ENCODE measurements at regions of chr9 and their contacts with region 1.

Region 1: DNA sequence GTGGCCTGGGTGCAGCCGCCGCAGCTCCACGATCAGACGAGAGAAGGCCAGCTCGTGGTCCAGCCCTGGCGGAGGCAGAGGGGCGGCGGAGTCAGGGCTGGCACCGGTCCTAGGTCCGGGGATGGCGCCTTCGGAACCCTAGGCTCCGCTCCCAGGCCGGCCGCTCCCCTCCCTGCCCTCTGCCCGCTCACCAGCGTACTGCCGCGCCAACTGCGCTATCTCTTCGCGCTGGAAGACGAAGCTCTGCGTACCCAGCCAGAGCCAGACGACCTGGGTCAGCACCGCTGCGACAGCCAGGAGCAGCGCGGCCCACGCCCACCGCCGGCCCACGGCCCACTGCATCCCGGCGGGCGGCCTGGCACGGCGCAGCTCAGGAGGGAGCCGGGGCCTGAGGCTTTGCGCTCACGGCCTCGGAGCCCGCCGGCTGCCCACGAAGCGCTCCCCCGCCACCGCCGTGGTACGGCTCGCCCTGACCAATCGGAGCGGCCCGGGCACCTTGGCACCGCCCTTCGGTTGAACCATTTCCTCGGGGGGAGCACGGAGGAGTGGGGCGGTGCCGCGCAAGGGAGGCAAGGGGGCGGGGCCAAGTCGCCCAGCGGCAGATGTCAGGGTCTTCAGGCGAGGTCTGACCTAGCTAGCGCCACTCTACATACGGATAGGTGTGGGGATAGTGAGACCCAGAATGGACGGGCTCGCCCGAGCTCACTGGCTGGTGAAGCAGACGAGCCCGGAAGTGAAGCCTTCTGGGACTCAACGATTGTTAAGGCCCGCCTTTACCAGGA is at the start of gene SIGMAR1:
- DNase-seq: peak; percentile 93
- ATAC-seq: peak; percentile 95
- H3K4me3 Mint-ChIP-seq: peak within 1 kb of the TSS; percentile 87
- H3K27ac Mint-ChIP-seq: peak within 1 kb of the TSS; percentile 78
- H3K4me1 Mint-ChIP-seq: peaks cover 29% of the 10 kb centered on the region
- H3K27me3 Mint-ChIP-seq: no peaks in the 10 kb centered on the region
- CTCF ChIP-seq: no peak
- total RNA-seq, gene SIGMAR1: 27.2 TPM in 2 replicates

Region 2: GRCh38 chr9:34437006-34437925 is 200.3 kb before region 1 on chr9:
- CTCF ChIA-PET with region 1: no interaction called
- POLR2A ChIA-PET with region 1: no interaction called
- intact Hi-C with region 1: loop called (anchors 1 kb)
- DNase-seq: no peak
- ATAC-seq: peak; percentile 85
- H3K4me3 Mint-ChIP-seq: no peak overlapping the region
- H3K27ac Mint-ChIP-seq: no peak overlapping the region
- H3K4me1 Mint-ChIP-seq: no peaks in the 10 kb centered on the region
- H3K27me3 Mint-ChIP-seq: no peaks in the 10 kb centered on the region
- CTCF ChIP-seq: no peak

Region 3: DNA sequence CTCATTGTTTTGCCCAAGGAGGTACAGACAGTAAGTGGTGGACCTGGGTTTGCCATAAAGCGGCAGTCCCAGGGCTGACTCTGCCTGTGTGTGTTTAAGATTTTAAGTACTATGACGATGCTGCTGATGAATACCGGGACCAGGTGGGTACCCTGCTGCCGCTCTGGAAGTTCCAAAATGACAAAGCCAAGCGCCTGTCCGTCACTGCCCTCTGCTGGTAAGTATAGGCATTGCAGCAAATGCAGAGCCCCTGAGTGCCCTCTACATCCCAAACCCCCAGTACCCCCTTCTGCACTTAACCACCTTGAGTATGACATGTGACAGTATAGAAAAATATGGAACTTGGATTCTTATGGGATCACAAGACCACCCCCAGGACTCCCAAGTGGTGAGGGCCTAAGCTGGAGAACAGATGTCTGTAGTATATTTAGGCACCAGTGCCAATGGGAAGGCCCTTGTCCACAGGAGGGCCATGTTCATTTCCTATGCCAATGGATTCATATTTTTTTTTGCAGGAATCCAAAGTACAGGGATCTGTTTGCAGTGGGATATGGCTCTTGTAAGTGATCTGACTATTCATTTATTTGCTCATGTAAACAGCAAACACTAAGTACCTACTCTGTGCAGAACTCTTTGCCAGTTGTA is 136.8 kb before region 1 on chr9:
- CTCF ChIA-PET with region 1: no interaction called
- POLR2A ChIA-PET with region 1: no interaction called
- intact Hi-C with region 1: loop called (anchors 1 kb)
- DNase-seq: peak; percentile 55
- ATAC-seq: peak; percentile 95
- H3K4me3 Mint-ChIP-seq: no peak overlapping the region
- H3K27ac Mint-ChIP-seq: no peak overlapping the region
- H3K4me1 Mint-ChIP-seq: no peaks in the 10 kb centered on the region
- H3K27me3 Mint-ChIP-seq: peaks cover 13% of the 10 kb centered on the region
- CTCF ChIP-seq: peak; percentile 75

Region 4: DNA sequence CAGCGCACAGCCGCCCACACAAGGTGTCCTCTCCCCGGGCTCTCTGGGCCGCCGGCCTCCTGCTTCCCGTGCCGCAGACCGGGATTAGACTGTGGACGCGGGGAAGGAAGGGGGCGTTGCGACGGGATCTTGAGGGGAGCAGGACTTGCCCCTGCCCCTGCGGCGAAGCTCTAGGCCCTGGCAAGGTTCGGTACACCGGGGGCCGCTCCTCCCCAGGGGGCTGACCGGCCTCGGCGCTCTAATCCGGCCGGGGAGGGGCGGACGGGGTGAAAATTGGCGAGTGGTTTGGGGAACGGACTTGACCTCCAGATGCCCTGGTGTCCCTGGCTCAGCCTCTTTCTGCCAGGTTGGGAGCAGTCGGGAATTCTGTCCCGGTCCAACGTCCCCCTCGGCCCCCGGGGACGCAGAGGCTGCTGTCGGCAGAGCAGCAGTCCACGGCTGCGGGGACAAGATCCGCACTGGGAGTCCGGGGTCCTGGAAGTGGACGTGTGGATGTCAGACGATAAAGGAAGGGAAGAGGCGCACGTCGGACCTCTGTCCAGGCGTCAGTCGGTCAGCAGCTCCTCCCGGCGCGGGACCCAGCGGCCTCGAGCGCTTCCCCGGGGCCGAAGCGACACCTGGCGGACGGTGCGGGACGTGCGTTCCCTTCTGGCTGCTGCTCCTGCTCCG is 46.2 kb before region 1 on chr9:
- CTCF ChIA-PET with region 1: interaction called, 12 read pairs
- POLR2A ChIA-PET with region 1: no interaction called
- intact Hi-C with region 1: no loop called
- DNase-seq: peak; percentile 82
- ATAC-seq: peak; percentile 90
- H3K4me3 Mint-ChIP-seq: peak overlapping the region; percentile 77
- H3K27ac Mint-ChIP-seq: no peak overlapping the region
- H3K4me1 Mint-ChIP-seq: peaks cover 41% of the 10 kb centered on the region
- H3K27me3 Mint-ChIP-seq: peaks cover 77% of the 10 kb centered on the region
- CTCF ChIP-seq: peak; percentile 21

Region 5: DNA sequence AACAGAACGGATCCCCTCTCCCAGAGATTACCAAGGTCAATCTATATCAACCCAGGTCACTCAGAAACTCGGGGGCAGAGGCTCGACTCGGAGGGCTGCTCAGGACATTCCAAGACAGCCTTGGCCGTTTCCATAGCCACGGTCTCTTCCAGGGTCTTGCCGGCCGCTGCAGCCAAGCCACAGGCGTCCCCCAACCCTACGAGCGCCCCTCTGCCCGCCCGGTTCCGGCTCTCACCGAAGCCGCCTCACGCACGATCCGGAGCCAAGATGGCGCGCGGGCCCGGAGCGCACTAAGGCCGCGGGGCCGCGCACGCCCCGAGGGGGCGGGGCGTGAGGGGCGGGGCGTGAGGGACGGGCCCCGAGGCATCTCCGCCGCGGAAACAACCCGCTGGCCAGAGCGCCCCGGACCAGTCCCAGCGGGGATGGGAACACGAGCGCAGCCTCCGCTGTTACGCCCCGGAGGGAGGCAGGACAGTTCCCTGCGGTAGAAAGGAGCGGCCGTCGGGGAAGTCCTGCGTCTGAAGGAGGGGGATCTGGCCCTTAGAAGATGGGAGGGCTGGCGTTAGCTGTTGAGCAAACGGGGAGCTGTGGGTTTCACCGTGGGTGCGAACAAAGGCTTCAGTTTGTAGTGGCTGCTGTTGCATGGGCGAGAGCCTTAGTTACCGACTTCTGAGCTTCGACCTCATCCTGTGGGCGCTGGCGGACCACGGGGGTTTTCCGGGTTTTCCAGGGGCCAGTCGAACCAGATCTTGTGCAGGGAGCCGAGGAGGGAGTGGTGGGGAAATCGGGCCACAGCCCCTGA is 25.5 kb before region 1 on chr9 and contains the start of gene RPP25L:
- CTCF ChIA-PET with region 1: interaction called, 62 read pairs
- POLR2A ChIA-PET with region 1: interaction called, 44 read pairs
- intact Hi-C with region 1: loop called (anchors 1 kb)
- DNase-seq: peak; percentile 90
- ATAC-seq: peak; percentile 96
- H3K4me3 Mint-ChIP-seq: peak within 1 kb of the TSS; percentile 86
- H3K27ac Mint-ChIP-seq: peak within 1 kb of the TSS; percentile 90
- H3K4me1 Mint-ChIP-seq: peaks cover 19% of the 10 kb centered on the region
- H3K27me3 Mint-ChIP-seq: no peaks in the 10 kb centered on the region
- CTCF ChIP-seq: no peak
- total RNA-seq, gene RPP25L: 17.5 and 18.9 TPM in 2 replicates

Region 6: DNA sequence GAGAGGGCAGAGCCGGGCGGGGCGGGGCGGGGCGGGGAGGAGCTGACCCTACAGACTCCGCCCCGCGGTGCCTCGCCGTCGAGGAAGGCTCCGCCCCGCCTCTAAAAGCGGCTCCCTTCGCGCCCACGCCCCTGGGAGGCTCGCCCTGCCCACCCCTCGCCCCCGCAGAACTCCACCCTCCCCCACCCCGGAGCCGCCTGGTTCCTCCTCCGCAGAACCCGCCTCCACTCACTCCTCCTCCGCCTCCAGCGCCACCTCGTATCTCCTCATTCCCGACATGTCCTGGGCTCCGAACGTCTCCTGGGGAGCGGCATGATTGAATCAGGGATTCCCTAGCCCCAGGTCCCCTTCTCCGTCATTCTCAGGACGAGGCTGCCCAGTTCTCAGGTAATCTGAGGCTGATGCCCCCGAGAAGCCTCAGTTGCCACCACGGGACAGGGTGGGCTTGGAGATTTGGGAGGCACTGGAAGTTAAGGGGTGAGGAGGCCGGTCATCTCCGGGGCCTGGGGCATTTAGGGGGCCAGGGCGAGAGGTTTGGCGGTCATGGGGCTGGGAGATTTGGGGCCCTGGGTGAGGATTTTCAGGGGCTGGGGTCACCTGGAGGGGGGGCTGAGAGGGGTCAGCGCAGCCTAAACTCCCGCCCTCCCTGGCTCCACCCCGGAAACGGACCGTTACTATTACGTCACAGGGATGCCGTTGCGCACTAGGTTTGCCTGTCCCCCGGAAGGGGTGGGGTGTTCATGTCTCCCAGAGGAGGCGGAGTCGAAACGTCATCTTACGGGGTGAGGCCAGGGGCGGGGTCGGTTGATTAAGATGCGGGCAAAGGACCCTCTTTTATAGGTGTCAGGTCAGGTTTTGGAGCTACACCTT is 28.1 kb after region 1 on chr9:
- CTCF ChIA-PET with region 1: interaction called, 5 read pairs
- POLR2A ChIA-PET with region 1: interaction called, 19 read pairs
- intact Hi-C with region 1: loop called (anchors 1 kb)
- DNase-seq: peak; percentile 75
- ATAC-seq: peak; percentile 90
- H3K4me3 Mint-ChIP-seq: peak overlapping the region; percentile 88
- H3K27ac Mint-ChIP-seq: peak overlapping the region; percentile 87
- H3K4me1 Mint-ChIP-seq: peaks cover 11% of the 10 kb centered on the region
- H3K27me3 Mint-ChIP-seq: no peaks in the 10 kb centered on the region
- CTCF ChIP-seq: no peak

Region 7: GRCh38 chr9:35553670-35554543 is 916.4 kb after region 1 on chr9:
- CTCF ChIA-PET with region 1: no interaction called
- POLR2A ChIA-PET with region 1: no interaction called
- intact Hi-C with region 1: no loop called
- DNase-seq: no peak
- ATAC-seq: peak; percentile 40
- H3K4me3 Mint-ChIP-seq: no peak overlapping the region
- H3K27ac Mint-ChIP-seq: no peak overlapping the region
- H3K4me1 Mint-ChIP-seq: peaks cover 2% of the 10 kb centered on the region
- H3K27me3 Mint-ChIP-seq: no peaks in the 10 kb centered on the region
- CTCF ChIP-seq: no peak